ENCODE measurements at regions of chr12 and their contacts with region 1.

Region 1: DNA sequence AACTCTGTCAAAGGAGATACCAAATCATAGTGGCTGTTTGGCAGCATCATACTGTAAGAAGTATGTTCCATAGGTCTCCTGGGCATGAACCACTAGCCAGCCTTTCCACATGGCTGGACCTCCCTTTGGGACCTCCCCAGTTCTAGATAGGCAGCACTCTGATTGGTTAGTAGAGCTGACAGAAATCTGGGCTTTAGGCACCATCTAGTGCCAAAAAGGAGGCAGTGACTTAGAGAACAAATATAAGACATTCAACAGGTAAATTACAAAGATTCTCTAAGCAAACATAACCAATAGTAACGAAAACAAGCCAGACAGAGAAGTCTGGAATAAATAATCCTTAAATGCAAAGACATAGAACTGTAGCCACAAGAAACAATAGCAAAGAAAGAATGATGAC is 148.0 kb upstream of the PDE3A start:
- H3K4me3 Mint-ChIP-seq: no peak overlapping the region
- H3K27ac Mint-ChIP-seq: no peak overlapping the region
- H3K4me1 Mint-ChIP-seq: no peaks in the 10 kb centered on the region
- H3K27me3 Mint-ChIP-seq: peaks cover 1% of the 10 kb centered on the region

Region 2: DNA sequence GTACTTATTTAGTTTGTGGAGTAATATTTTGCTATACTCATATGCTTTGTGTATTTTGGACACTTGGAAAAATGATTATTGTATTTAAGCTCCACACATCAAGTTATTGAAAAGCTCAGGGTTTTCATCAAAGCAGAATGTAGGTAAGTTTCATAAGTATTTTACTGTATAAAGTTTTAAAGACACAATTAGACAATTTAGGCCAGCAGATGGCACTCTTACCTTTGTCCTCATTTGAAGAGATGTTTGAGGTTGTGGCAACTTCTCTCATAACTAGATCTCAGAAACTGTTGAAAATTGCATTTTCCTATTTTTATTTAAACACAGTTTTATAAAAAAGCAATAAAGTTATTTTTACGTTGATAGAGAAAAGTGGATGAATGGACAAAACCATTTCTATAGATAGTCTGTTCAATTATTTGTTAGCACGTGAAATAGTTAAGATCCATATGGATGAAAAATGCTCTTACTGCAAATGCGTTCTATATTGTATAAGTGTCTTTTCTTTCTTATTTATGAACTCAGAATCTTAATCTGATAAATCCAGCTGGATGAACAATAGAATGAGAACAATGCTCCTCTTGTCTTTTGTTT is 481.1 kb before region 1 on chr12:
- intact Hi-C with region 1: loop called (anchors 1 kb)
- H3K4me3 Mint-ChIP-seq: no peak overlapping the region
- H3K27ac Mint-ChIP-seq: no peak overlapping the region
- H3K4me1 Mint-ChIP-seq: no peaks in the 10 kb centered on the region
- H3K27me3 Mint-ChIP-seq: no peaks in the 10 kb centered on the region

Region 3: GRCh38 chr12:19757317-19757877 is 462.9 kb before region 1 on chr12:
- intact Hi-C with region 1: loop called (anchors 5 kb)
- H3K4me3 Mint-ChIP-seq: no peak overlapping the region
- H3K27ac Mint-ChIP-seq: no peak overlapping the region
- H3K4me1 Mint-ChIP-seq: peaks cover 19% of the 10 kb centered on the region
- H3K27me3 Mint-ChIP-seq: no peaks in the 10 kb centered on the region

Region 4: GRCh38 chr12:20077618-20078017 is 142.7 kb before region 1 on chr12:
- intact Hi-C with region 1: no loop called
- H3K4me3 Mint-ChIP-seq: no peak overlapping the region
- H3K27ac Mint-ChIP-seq: no peak overlapping the region
- H3K4me1 Mint-ChIP-seq: no peaks in the 10 kb centered on the region
- H3K27me3 Mint-ChIP-seq: no peaks in the 10 kb centered on the region

Region 5: DNA sequence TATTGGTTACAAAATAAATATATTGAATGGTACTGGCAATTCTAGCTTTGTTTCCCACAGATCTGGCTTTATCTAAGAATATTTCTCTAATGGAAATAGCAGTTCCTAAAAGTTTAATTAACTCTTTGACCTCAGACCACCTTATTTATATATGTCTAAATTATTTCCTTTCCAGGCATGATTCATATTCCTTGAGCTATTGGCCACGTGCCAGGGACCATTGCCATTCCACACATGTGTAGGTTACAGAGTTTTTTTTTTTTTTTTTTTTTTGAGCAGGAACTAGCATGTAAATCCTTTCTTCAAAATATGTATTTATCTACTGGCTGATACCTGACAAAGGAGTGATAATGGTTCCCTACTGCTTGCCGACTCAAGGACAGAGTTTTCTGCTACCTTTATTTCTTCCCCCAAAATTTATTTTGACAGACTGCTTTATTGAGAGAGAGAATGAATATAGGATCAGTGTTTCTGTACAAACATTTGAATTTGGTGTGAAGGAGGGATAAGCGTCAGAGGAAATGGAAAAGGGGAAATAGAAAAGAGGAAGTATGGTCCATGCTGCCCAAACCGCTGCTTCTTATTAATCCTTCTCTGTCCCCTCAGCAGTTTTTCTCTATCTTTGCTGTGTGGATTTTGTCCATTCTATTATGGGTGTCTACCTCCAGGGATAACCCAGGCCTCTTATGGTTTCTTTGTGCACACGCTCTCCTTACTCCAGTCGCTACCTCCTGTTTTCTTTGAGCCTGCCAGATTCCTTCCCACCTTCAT is 184.4 kb after region 1 on chr12:
- intact Hi-C with region 1: no loop called
- H3K4me3 Mint-ChIP-seq: peak overlapping the region; percentile 35
- H3K27ac Mint-ChIP-seq: peak overlapping the region; percentile 71
- H3K4me1 Mint-ChIP-seq: peaks cover 30% of the 10 kb centered on the region
- H3K27me3 Mint-ChIP-seq: peaks cover 6% of the 10 kb centered on the region